Posterior vena cava (tissue), 2 donors: ENCODE measurements at regions of chr13 and their contacts with region 1.

Region 1: GRCh38 chr13:56653043-56653442 is 487.7 kb upstream of the PRR20A start:
- DNase-seq: no peak

Region 2: GRCh38 chr13:56720841-56721240 is 67.8 kb after region 1 on chr13:
- intact Hi-C with region 1: no loop called
- DNase-seq: no peak

Region 3: GRCh38 chr13:57375876-57376275 is 722.8 kb after region 1 on chr13:
- intact Hi-C with region 1: loop called in 1 of 2 experiments (anchors 10 kb)
- DNase-seq: no peak